ENCODE measurements at regions of chr7 and their contacts with region 1.

Region 1: DNA sequence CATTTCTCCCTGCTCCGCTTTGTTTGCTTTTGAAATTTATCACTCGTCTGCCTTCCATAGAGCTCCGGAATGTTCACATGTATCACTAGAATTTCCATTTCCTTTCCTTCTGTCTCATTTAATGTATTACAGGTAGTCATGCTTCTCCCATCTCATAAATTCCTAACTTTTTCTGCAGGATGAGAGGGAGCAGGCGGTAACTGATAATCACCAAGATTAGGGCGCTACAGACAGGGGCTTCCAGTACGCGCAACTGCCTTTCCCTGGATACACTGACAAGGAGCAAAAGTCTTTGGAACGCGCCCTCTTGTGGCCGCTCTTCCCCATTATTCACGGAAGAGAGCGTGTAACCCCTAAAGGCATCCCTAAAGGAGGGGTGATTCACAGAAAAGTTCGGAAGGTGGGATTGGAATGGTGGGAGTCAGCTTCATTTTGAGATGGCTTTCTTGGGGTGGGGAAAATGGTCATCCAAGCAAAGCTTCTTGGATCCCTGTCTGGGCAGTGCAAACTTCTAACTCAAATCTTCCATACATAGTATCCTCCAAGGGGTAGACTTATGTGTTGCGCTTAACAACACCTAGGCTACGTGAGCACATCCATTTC is 6.5 kb downstream of the INHBA start:
- DNase-seq: peak; percentile 94
- H3K4me3 ChIP-seq: peak overlapping the region; percentile 24 to 94 (median 31)
- H3K27ac ChIP-seq: peak overlapping the region; percentile 98
- H3K4me1 ChIP-seq: peaks cover 53% of the 10 kb centered on the region
- H3K27me3 ChIP-seq: no peaks in the 10 kb centered on the region
- CTCF ChIP-seq: peak; percentile 76 to 87
- POLR2A ChIP-seq: peak; percentile 49

Region 2: DNA sequence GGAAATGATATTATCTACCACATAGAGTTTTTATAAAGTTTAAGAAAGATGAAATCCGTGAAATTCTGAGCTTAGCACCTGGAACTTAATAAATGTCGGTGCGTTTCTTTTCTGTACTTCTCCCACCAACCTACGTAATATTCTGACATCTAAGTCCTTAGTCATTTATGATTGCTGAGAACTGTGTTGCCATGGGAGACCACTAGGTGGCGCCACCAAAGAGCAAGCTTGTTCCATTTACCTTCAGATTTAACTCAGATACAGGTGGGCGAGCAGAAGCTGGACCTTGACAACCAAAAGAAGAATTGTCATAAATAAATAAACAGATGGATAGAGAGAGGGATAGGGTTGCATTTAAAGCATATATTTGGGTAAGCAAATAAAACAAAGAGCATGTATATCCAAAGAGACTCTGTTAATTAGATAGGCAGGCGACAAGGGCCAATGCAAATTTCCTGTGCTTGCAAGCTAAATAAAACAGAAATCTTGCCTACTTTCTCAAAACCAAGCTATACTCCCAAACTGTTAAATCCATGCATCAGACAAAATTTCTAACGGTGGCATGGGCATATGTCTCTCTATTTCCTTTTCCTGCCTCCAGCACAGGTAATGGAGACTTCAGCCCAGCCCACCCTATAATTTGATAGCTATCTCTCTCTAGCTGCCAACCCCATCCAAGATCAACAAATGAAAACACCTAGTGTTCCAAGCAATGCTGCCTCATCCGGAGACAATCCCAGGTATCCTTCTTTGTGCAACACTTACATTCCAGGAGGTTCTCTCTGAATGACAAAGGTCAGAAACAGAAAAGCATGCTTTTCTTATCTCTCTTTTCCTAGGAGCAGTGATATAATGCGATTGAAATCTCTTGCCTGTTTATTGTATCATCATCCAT is 693.1 kb before region 1 on chr7:
- CTCF ChIA-PET with region 1: interaction called, 87 read pairs
- POLR2A ChIA-PET with region 1: no interaction called
- dilution Hi-C with region 1: no loop called
- intact Hi-C with region 1: loop called (anchors 1 kb)
- DNase-seq: peak; percentile 80
- H3K4me3 ChIP-seq: no peak overlapping the region
- H3K27ac ChIP-seq: no peak overlapping the region
- H3K4me1 ChIP-seq: no peaks in the 10 kb centered on the region
- H3K27me3 ChIP-seq: no peaks in the 10 kb centered on the region
- CTCF ChIP-seq: peak; percentile 73 to 77
- POLR2A ChIP-seq: no peak

Region 3: DNA sequence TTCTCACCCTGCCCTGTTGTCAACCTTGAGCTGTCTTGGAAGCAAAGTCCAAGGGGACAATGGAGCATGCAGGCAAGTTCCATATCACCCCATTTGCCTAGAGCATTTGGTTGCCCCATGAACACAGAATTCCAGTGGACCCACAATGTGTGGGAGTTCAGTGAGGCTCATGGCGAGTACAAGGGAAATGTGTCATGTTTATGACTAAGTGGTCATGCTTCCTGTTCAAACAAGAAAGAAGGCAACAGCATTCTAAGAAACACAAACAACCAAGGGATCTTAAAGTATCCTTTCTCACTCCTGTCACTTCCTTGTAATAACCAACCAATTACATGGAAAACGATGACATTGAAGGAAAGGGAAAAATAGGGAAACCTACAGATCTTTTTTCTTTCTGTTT is 506.5 kb before region 1 on chr7:
- CTCF ChIA-PET with region 1: interaction called, 7 read pairs
- POLR2A ChIA-PET with region 1: no interaction called
- dilution Hi-C with region 1: no loop called
- intact Hi-C with region 1: loop called (anchors 1 kb)
- DNase-seq: peak; percentile 97
- H3K4me3 ChIP-seq: no peak overlapping the region
- H3K27ac ChIP-seq: peak overlapping the region; percentile 100
- H3K4me1 ChIP-seq: peaks cover 42% of the 10 kb centered on the region
- H3K27me3 ChIP-seq: no peaks in the 10 kb centered on the region
- CTCF ChIP-seq: no peak
- POLR2A ChIP-seq: peak; percentile 62

Region 4: DNA sequence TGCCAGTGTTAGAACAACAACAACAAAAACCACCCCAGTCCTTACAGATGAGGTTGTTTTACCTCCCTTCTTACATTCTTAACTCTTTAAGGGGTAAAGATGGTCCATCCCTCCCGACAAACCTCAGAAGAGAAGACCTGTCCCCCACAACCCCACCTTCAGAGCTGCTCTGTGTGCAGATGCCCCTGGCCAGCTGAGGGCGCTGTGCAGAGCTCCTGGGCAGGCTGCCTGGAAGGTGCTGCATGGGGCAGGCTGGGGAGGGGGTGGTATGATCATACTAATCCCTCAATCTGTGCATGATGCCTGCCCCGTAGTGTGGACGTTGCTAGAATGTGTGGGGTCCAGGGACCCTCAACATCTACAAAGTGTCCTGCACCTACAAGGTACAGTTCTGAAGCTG is 380.7 kb before region 1 on chr7:
- CTCF ChIA-PET with region 1: interaction called, 3 read pairs
- POLR2A ChIA-PET with region 1: no interaction called
- dilution Hi-C with region 1: no loop called
- intact Hi-C with region 1: loop called (anchors 5 kb)
- DNase-seq: no peak
- H3K4me3 ChIP-seq: no peak overlapping the region
- H3K27ac ChIP-seq: no peak overlapping the region
- H3K4me1 ChIP-seq: no peaks in the 10 kb centered on the region
- H3K27me3 ChIP-seq: no peaks in the 10 kb centered on the region
- CTCF ChIP-seq: peak; percentile 17 to 31
- POLR2A ChIP-seq: no peak

Region 5: GRCh38 chr7:41508755-41509154 is 187.7 kb before region 1 on chr7:
- CTCF ChIA-PET with region 1: no interaction called
- POLR2A ChIA-PET with region 1: no interaction called
- dilution Hi-C with region 1: no loop called
- intact Hi-C with region 1: loop called (anchors 2 kb)
- DNase-seq: peak; percentile 72
- H3K4me3 ChIP-seq: no peak overlapping the region
- H3K27ac ChIP-seq: peak overlapping the region; percentile 46
- H3K4me1 ChIP-seq: peaks cover 13% of the 10 kb centered on the region
- H3K27me3 ChIP-seq: no peaks in the 10 kb centered on the region
- CTCF ChIP-seq: no peak
- POLR2A ChIP-seq: no peak

Region 6: GRCh38 chr7:41579961-41580940 is 116.2 kb before region 1 on chr7:
- CTCF ChIA-PET with region 1: interaction called, 17 read pairs
- POLR2A ChIA-PET with region 1: no interaction called
- dilution Hi-C with region 1: no loop called
- intact Hi-C with region 1: loop called (anchors 1 kb)
- DNase-seq: peak; percentile 95
- H3K4me3 ChIP-seq: no peak overlapping the region
- H3K27ac ChIP-seq: peak overlapping the region; percentile 93
- H3K4me1 ChIP-seq: peaks cover 43% of the 10 kb centered on the region
- H3K27me3 ChIP-seq: no peaks in the 10 kb centered on the region
- CTCF ChIP-seq: no peak
- POLR2A ChIP-seq: no peak

Region 7: GRCh38 chr7:41711283-41712064 is 15.1 kb after region 1 on chr7:
- CTCF ChIA-PET with region 1: interaction called, 18 read pairs
- POLR2A ChIA-PET with region 1: no interaction called
- dilution Hi-C with region 1: no loop called
- intact Hi-C with region 1: no loop called
- DNase-seq: peak; percentile 48
- H3K4me3 ChIP-seq: no peak overlapping the region
- H3K27ac ChIP-seq: no peak overlapping the region
- H3K4me1 ChIP-seq: no peaks in the 10 kb centered on the region
- H3K27me3 ChIP-seq: peaks cover 0 to 2% of the 10 kb centered on the region in 2 experiments
- CTCF ChIP-seq: peak; percentile 52 to 69
- POLR2A ChIP-seq: no peak